ENCODE measurements at regions of chr2 and their contacts with region 1.

Region 1: GRCh38 chr2:197813093-197813787 is 8.8 kb downstream of the PLCL1 start:
- DNase-seq: no peak
- ATAC-seq: peak; percentile 81
- H3K4me3 Mint-ChIP-seq: no peak overlapping the region
- H3K27ac Mint-ChIP-seq: no peak overlapping the region
- H3K4me1 Mint-ChIP-seq: peaks cover 20% of the 10 kb centered on the region
- H3K27me3 Mint-ChIP-seq: no peaks in the 10 kb centered on the region
- CTCF ChIP-seq: peak; percentile 58

Region 2: GRCh38 chr2:197515739-197516392 is 297.4 kb before region 1 on chr2 and contains the start of gene MOB4:
- CTCF ChIA-PET with region 1: no interaction called
- POLR2A ChIA-PET with region 1: no interaction called
- intact Hi-C with region 1: no loop called
- DNase-seq: peak; percentile 94
- ATAC-seq: peak; percentile 96
- H3K4me3 Mint-ChIP-seq: peak within 1 kb of the TSS; percentile 99
- H3K27ac Mint-ChIP-seq: peak within 1 kb of the TSS; percentile 92
- H3K4me1 Mint-ChIP-seq: peaks cover 33% of the 10 kb centered on the region
- H3K27me3 Mint-ChIP-seq: no peaks in the 10 kb centered on the region
- CTCF ChIP-seq: no peak
- total RNA-seq, gene MOB4: 15.1 to 15.9 TPM

Region 3: DNA sequence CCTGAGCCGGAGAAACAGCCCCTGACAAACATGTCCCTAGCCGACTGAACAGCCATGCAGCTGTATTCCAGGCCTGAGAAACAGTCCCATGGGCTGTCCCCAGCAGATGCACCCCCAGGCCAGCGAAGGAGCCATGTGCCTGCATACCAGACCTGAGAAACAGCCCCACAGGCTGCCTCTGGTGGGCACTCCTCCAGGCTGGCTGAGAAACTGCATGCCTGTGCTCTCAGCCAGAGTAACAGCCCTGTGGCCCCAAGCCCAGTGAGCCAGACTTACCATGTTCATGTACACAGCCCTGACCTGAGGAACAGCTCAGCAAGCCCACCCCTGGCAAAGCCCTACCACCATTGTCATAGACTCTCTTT is 53.0 kb before region 1 on chr2:
- CTCF ChIA-PET with region 1: no interaction called
- POLR2A ChIA-PET with region 1: no interaction called
- intact Hi-C with region 1: no loop called
- DNase-seq: no peak
- ATAC-seq: no peak
- H3K4me3 Mint-ChIP-seq: no peak overlapping the region
- H3K27ac Mint-ChIP-seq: no peak overlapping the region
- H3K4me1 Mint-ChIP-seq: no peaks in the 10 kb centered on the region
- H3K27me3 Mint-ChIP-seq: peaks cover 4% of the 10 kb centered on the region
- CTCF ChIP-seq: no peak

Region 4: GRCh38 chr2:197828464-197829135 is 15.4 kb after region 1 on chr2:
- CTCF ChIA-PET with region 1: interaction called, 17 read pairs
- POLR2A ChIA-PET with region 1: no interaction called
- intact Hi-C with region 1: no loop called
- DNase-seq: no peak
- ATAC-seq: no peak
- H3K4me3 Mint-ChIP-seq: no peak overlapping the region
- H3K27ac Mint-ChIP-seq: no peak overlapping the region
- H3K4me1 Mint-ChIP-seq: no peaks in the 10 kb centered on the region
- H3K27me3 Mint-ChIP-seq: no peaks in the 10 kb centered on the region
- CTCF ChIP-seq: no peak

Region 5: DNA sequence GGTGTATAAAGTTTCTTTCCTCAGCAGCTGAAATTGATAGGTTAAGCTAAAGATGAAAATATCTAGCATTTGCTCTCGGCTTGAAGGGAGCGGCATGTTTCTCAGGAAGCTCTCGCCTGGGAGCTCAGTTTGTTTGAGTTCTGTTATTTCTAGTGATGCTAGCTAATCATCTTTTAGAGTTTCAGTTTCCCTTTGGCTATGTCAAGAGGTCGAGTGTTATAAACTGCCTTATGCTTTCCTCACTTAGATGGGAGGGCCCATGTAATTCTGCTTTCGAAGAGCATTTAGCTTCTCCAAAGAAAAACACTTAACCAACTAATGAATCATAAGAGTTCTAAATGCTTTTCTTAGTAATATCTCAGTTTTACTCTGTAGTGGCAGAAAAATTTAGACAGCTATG is 24.8 kb after region 1 on chr2:
- CTCF ChIA-PET with region 1: interaction called, 17 read pairs
- POLR2A ChIA-PET with region 1: no interaction called
- intact Hi-C with region 1: no loop called
- DNase-seq: peak; percentile 37
- ATAC-seq: peak; percentile 97
- H3K4me3 Mint-ChIP-seq: peak overlapping the region; percentile 64
- H3K27ac Mint-ChIP-seq: peak overlapping the region; percentile 80
- H3K4me1 Mint-ChIP-seq: peaks cover 54% of the 10 kb centered on the region
- H3K27me3 Mint-ChIP-seq: no peaks in the 10 kb centered on the region
- CTCF ChIP-seq: no peak

Region 6: DNA sequence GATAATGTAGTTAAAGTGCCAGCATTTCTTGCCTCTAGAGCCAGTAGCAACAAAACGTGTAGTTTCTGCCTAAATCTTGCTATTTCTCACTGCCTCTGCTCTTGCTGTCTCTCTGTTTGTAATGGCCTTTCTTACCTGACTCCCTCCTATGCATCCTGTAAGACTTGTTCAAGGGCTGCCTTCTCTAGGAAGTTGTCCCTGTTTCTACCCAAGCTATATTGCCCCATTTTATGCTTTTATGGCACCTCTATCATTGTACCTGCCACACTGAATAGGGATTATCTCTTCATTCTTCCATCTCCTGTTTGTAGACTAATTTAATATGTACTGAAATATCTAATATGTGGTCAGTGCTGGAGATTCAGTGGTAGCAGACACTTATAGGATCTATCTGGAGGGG is 40.3 kb after region 1 on chr2:
- CTCF ChIA-PET with region 1: no interaction called
- POLR2A ChIA-PET with region 1: no interaction called
- intact Hi-C with region 1: no loop called
- DNase-seq: no peak
- ATAC-seq: no peak
- H3K4me3 Mint-ChIP-seq: no peak overlapping the region
- H3K27ac Mint-ChIP-seq: no peak overlapping the region
- H3K4me1 Mint-ChIP-seq: peaks cover 33% of the 10 kb centered on the region
- H3K27me3 Mint-ChIP-seq: no peaks in the 10 kb centered on the region
- CTCF ChIP-seq: no peak

Region 7: DNA sequence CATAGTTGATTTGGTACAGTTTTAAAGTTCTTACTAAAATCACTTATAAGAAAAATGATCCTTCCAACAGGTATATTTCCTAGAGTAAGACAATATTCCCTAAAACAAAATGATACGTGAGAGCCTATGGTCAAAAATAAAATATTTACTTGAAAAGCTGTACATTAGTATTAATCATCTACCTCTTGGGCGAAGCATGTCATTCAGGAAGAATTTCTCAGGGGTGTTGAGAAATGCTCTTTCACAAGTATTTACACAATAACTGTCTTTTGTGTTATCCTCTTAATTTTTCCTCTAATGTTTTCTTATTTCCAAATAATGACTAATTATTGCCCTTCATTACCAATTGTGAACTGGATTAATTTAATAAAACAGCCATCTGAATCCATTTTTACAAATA is 1178.2 kb after region 1 on chr2:
- CTCF ChIA-PET with region 1: no interaction called
- POLR2A ChIA-PET with region 1: no interaction called
- intact Hi-C with region 1: no loop called
- DNase-seq: no peak
- ATAC-seq: no peak
- H3K4me3 Mint-ChIP-seq: no peak overlapping the region
- H3K27ac Mint-ChIP-seq: no peak overlapping the region
- H3K4me1 Mint-ChIP-seq: no peaks in the 10 kb centered on the region
- H3K27me3 Mint-ChIP-seq: no peaks in the 10 kb centered on the region
- CTCF ChIP-seq: no peak

Measured in activated CD8-positive, alpha-beta T cell treated with anti-CD3 and anti-CD28 coated beads for 36 hours (primary cell).